Activated T-helper 1 cell treated with anti-CD3 and anti-CD28 coated beads, Interleukin-12 subunit alpha, Interleukin-12 subunit beta, Interleukin-2, Interleukin-4 antibody, amounts not matched to agents 30 ng/mL and 10 ng/mL and 1 ng/mL, durations not matched to agents 14 hours and 24 hours and 36 hours (primary cell): ENCODE measurements at regions of chr14 and their contacts with region 1.

Region 1: GRCh38 chr14:66395300-66395699 is 90.9 kb upstream of the CCDC196 start:
- DNase-seq: peak; percentile 34
- H3K4me3 Mint-ChIP-seq: peak overlapping the region; percentile 41
- H3K27ac Mint-ChIP-seq: peak overlapping the region; percentile 47
- H3K4me1 Mint-ChIP-seq: peaks cover 13% of the 10 kb centered on the region
- H3K27me3 Mint-ChIP-seq: peaks cover 11% of the 10 kb centered on the region

Region 2: GRCh38 chr14:65966191-65966590 is 429.1 kb before region 1 on chr14:
- intact Hi-C with region 1: loop called (anchors 5 kb)
- DNase-seq: no peak
- H3K4me3 Mint-ChIP-seq: no peak overlapping the region
- H3K27ac Mint-ChIP-seq: no peak overlapping the region
- H3K4me1 Mint-ChIP-seq: peaks cover 6% of the 10 kb centered on the region
- H3K27me3 Mint-ChIP-seq: peaks cover 38% of the 10 kb centered on the region

Region 3: DNA sequence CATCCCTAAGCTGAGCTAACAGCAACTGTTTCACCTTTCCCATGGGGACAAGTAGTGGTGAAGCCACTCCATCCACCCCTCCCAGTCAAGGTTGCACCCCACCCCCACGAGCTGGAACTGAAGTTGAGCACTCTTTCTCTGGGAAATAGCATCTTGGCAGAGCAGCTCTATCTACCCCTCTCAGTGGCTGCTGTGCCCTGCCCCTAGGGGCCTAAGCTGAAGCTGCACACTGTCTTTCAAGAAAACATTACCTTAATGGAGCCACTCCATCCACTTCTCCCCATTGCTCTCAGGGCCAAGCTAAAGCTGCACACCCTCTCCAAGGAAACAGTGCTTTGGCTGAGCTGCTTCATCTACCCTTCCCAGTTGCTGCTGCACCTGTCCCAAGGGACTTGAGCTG is 79.8 kb before region 1 on chr14:
- intact Hi-C with region 1: no loop called
- DNase-seq: no peak
- H3K4me3 Mint-ChIP-seq: no peak overlapping the region
- H3K27ac Mint-ChIP-seq: no peak overlapping the region
- H3K4me1 Mint-ChIP-seq: no peaks in the 10 kb centered on the region
- H3K27me3 Mint-ChIP-seq: no peaks in the 10 kb centered on the region

Region 4: GRCh38 chr14:66425402-66425801 is 30.1 kb after region 1 on chr14:
- intact Hi-C with region 1: no loop called
- DNase-seq: no peak
- H3K4me3 Mint-ChIP-seq: no peak overlapping the region
- H3K27ac Mint-ChIP-seq: no peak overlapping the region
- H3K4me1 Mint-ChIP-seq: no peaks in the 10 kb centered on the region
- H3K27me3 Mint-ChIP-seq: no peaks in the 10 kb centered on the region